Posterior vena cava (tissue), 2 donors: ENCODE measurements at regions of chr7 and their contacts with region 1.

Region 1: DNA sequence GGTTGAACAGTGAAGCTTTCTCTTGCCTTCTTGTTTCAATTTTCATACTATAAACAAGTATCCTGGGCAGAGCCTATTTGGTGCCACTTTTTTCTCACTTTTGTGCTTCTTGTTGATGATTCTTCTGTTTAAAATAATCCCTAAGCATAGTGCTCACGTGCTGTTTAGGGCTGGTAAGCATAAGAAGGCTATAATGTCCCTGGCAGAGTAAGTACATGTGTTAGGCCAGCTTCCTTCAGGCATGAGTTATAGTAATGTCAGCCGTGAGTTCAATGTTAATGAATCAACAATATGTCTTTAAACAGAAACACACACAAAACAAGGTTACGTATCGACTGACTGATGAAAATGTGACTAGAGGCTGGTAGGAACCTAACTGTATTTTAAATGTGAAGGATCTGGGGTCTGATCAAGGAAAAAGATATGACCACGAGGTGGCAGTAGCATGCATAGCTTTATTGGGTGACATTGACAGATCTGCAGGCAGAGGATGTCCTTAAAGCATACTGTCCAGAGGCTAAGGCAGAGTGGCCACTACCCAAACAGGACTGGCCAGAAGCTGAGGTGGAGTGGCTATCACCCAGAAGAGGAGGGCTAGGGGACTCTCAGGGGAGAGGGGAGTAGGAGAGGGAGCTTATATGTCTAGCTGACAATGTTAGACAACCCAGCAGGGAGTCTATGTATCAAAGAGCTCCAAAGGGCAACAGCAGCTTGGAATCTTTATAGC is 113.7 kb downstream of the BRAF start:
- DNase-seq: no peak

Region 2: DNA sequence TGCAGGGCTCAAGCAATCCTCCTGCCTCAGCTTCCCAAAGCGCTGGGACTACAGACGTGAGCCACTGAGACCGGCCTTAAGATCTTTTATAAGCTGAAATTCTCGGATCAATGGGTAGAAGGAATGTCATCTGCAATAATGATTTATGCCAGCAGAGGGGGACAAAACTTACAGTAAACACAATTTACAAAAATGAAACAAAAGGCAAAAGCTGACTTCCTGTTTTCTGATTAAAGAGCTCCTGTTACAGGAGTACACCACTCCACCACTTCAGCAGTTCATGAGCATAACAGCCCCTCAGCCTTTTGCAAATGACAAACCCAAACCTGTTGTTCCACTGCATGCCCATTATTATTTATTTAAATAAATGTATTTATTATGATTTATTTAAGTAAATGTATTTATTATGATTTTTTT is 1924.5 kb before region 1 on chr7:
- intact Hi-C with region 1: loop called in 1 of 2 experiments (anchors 10 kb)
- DNase-seq: no peak

Region 3: GRCh38 chr7:140485500-140486265 is 325.3 kb before region 1 on chr7:
- intact Hi-C with region 1: no loop called
- DNase-seq: no peak

Region 4: DNA sequence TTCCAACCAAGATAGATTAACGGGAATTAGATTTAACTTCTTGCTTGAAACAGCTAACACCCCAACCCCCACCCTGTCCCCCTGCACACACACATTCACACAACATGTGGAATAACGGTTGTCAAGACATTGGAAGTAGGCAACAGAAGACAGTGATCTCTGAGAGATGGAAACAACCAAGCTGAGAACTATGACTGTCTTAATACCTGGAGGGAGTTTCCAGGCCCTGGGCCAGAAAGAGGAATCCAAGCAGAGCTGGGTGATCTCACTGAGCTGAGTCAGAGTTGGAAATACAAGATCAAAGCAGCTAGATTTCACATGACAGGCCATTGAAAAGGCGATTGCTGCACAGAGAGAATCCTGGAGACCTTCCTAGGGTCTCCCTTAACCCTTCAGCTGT is 1772.4 kb after region 1 on chr7:
- intact Hi-C with region 1: no loop called
- DNase-seq: no peak